Heart left ventricle (tissue), 16 donors: ENCODE measurements at regions of chr11 and their contacts with region 1.

Region 1: DNA sequence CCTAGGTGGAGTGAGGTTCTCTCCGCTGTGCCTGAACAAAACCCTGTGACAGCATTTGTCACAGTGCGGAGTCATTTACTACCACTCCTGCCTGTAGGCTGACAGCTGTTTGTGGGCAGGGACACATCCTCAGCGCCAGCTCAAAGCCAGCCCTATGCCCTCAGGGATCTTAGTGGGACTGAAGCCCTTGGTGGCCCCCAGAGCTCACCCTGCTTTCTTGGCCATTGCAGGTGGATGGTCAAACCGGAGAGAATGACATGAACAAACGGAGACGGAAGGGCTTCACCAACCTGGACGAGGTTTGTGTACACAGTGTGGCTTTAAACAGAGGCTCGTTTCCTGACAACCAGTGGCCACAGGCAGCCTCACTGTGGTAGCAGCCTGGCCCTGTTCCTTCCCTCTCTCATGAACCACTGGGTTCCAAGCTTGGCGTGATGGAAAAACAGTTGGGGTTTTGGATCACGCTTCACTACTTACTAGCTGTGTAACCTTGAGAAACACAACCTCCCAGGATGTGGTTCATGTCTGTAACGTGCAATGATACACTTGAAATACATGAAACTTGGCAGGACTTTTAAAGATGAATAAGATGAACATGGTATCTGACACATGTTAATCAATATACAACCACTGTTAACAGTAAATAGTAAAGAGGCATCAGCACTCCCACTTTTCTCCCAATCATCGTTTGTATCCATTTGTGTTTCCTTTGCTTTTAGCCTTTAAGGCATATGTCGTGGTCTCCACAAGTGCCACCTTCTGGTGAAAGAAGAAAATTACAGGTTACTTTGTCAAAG is 125.8 kb downstream of the MICAL2 start:
- DNase-seq: no peak
- ATAC-seq: peak; percentile 35 to 54 (median 44)
- H3K4me3 ChIP-seq: no peak overlapping the region
- H3K27ac ChIP-seq: peak overlapping the region in 10 of 12 donors; percentile 22 to 82 (median 60)
- H3K4me1 ChIP-seq: peaks cover 0 to 60% (median 30%) of the 10 kb centered on the region in 12 donors
- H3K27me3 ChIP-seq: no peaks in the 10 kb centered on the region
- CTCF ChIP-seq: peak; percentile 54 to 81 (median 73)
- POLR2A ChIP-seq: no peak

Region 2: GRCh38 chr11:11669233-11669846 is 566.8 kb before region 1 on chr11:
- intact Hi-C with region 1: no loop called
- DNase-seq: no peak
- ATAC-seq: no peak
- H3K4me3 ChIP-seq: no peak overlapping the region
- H3K27ac ChIP-seq: peak overlapping the region in 1 of 12 donors; percentile 50
- H3K4me1 ChIP-seq: peaks cover 0 to 6% (median 0%) of the 10 kb centered on the region in 12 donors
- H3K27me3 ChIP-seq: peaks cover 0 to 9% (median 0%) of the 10 kb centered on the region in 9 donors
- CTCF ChIP-seq: no peak
- POLR2A ChIP-seq: no peak

Region 3: GRCh38 chr11:12052676-12053605 is 183.2 kb before region 1 on chr11:
- intact Hi-C with region 1: loop called in 3 of 10 experiments (anchors 5 kb)
- DNase-seq: no peak
- ATAC-seq: no peak
- H3K4me3 ChIP-seq: no peak overlapping the region
- H3K27ac ChIP-seq: peak overlapping the region in 1 of 12 donors; percentile 21
- H3K4me1 ChIP-seq: peaks cover 0 to 24% (median 10%) of the 10 kb centered on the region in 12 donors
- H3K27me3 ChIP-seq: no peaks in the 10 kb centered on the region
- CTCF ChIP-seq: no peak
- POLR2A ChIP-seq: no peak

Region 4: DNA sequence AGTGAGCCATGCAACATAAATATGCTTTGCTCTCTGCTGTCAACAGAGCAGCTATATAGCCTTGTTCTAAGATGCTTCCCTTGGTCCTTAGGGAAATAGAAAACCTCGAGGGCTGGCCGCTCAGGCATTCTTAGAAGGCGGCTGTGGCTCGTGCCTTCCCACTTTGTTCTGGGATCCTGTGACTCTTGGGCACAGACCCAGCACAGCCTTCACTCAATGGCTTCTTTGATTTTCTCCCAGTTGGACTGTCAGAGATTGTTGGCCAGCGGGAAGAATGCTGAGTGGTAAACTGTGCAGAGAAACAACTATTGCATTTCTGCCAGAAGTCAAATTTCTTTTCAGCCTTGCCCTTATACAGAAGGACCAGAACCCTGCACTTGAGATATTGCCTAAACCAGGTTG is 135.3 kb before region 1 on chr11:
- intact Hi-C with region 1: loop called in 2 of 10 experiments (anchors 5 to 10 kb)
- DNase-seq: peak in 2 of 5 donors; percentile 42 to 75
- ATAC-seq: peak; percentile 48 to 67 (median 63)
- H3K4me3 ChIP-seq: no peak overlapping the region
- H3K27ac ChIP-seq: no peak overlapping the region
- H3K4me1 ChIP-seq: peaks cover 0 to 47% (median 23%) of the 10 kb centered on the region in 12 donors
- H3K27me3 ChIP-seq: no peaks in the 10 kb centered on the region
- CTCF ChIP-seq: no peak
- POLR2A ChIP-seq: no peak

Region 5: GRCh38 chr11:12159351-12160099 is 76.6 kb before region 1 on chr11:
- intact Hi-C with region 1: loop called in 2 of 10 experiments (anchors 5 kb)
- DNase-seq: no peak
- ATAC-seq: peak; percentile 39 to 56 (median 46)
- H3K4me3 ChIP-seq: no peak overlapping the region
- H3K27ac ChIP-seq: peak overlapping the region; percentile 66 to 96 (median 86)
- H3K4me1 ChIP-seq: peaks cover 3 to 90% (median 74%) of the 10 kb centered on the region in 12 donors
- H3K27me3 ChIP-seq: no peaks in the 10 kb centered on the region
- CTCF ChIP-seq: no peak
- POLR2A ChIP-seq: no peak